ENCODE measurements at regions of chr18 and their contacts with region 1.

Region 1: DNA sequence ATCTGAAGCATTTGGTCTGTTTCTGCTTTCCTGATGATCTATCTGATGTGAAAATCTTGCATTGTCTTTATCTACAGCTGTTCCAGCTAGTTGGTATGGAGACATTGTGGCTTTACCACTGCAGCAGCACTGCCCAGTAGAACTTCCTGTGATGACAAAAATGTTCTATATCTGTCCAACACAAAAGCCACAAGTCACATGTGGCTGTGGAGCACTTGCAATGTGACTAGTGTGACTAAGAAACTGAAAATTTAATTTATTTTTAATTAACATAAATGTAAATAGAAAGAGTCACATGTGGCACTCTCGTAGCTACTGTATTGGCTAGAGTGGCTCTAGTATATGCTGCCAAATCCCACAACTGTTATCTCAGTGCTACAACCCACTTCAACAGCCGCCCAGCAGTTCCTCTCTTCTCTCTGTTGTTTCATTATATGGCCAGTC is 425.7 kb downstream of the SETBP1 start:
- DNase-seq: peak; percentile 17
- ATAC-seq: peak; percentile 56
- H3K4me3 Mint-ChIP-seq: peak overlapping the region; percentile 21
- H3K27ac Mint-ChIP-seq: no peak overlapping the region
- H3K4me1 Mint-ChIP-seq: peaks cover 2% of the 10 kb centered on the region
- H3K27me3 Mint-ChIP-seq: no peaks in the 10 kb centered on the region
- CTCF ChIP-seq: no peak

Region 2: DNA sequence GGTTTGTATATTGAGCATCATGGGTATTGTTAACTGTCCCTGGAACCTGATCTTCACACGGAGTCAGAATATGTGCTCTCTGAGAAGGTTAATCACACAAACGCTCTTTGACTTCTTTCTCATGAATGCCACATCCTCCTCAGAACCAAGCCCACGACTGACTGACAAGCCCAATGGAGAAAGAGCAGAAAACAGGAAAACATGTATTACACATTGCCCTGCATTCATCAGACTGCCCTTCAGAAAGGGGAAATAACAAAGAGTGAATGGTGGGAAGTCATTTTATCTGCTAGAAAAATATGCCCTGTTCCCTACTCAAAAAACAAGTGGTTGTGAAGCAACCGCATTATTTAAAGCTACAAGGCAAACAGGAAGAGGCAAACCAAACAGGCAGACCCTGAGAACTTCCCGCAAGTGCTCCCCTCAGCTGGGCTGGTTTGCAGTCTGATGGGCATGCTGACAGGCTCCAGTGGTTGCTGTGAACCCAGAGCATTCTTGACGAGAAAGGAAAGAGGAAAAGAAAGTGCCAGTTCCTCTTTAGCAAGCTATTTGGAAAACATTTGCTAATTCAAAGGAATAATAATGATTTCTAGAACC is 598.5 kb before region 1 on chr18:
- CTCF ChIA-PET with region 1: no interaction called
- POLR2A ChIA-PET with region 1: interaction called, 4 read pairs
- intact Hi-C with region 1: loop called (anchors 1 kb)
- DNase-seq: peak; percentile 26
- ATAC-seq: peak; percentile 90
- H3K4me3 Mint-ChIP-seq: no peak overlapping the region
- H3K27ac Mint-ChIP-seq: no peak overlapping the region
- H3K4me1 Mint-ChIP-seq: peaks cover 24% of the 10 kb centered on the region
- H3K27me3 Mint-ChIP-seq: no peaks in the 10 kb centered on the region
- CTCF ChIP-seq: no peak

Region 3: DNA sequence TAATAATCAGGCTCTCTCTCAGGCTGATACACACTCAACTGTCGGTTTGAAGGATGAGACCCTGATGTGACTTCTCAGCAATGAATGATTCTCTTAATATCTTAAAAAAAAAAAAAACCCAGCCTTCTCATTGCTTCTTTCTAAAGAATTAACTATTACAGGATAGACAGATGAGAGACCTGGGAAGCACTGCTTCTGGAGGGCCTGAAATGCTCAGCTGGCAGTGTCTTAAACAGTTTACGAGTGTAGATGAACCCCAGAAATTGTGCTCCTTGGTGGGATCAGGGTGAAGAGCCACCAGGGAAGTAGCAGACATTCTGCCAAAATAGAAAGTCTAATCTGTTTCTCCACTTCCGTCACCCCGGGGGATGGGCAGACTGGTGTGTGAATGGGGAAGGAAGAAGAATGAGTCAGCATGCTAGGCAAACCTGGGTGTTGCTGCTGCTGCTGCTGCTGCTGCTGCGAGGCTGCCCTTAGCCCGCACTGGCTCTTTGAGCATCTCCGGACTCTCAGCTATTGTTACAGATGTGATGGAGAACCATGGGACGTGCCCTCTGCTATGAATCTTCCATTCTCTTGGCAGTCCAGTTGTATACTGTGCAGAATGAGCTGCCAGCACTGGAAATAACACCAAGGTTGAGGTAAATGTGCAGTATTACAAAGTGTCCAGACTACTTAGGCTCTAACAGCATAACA is 267.2 kb before region 1 on chr18:
- CTCF ChIA-PET with region 1: no interaction called
- POLR2A ChIA-PET with region 1: no interaction called
- intact Hi-C with region 1: loop called (anchors 5 kb)
- DNase-seq: peak; percentile 58
- ATAC-seq: peak; percentile 83
- H3K4me3 Mint-ChIP-seq: peak overlapping the region; percentile 61
- H3K27ac Mint-ChIP-seq: peak overlapping the region; percentile 81
- H3K4me1 Mint-ChIP-seq: peaks cover 81% of the 10 kb centered on the region
- H3K27me3 Mint-ChIP-seq: no peaks in the 10 kb centered on the region
- CTCF ChIP-seq: no peak

Region 4: DNA sequence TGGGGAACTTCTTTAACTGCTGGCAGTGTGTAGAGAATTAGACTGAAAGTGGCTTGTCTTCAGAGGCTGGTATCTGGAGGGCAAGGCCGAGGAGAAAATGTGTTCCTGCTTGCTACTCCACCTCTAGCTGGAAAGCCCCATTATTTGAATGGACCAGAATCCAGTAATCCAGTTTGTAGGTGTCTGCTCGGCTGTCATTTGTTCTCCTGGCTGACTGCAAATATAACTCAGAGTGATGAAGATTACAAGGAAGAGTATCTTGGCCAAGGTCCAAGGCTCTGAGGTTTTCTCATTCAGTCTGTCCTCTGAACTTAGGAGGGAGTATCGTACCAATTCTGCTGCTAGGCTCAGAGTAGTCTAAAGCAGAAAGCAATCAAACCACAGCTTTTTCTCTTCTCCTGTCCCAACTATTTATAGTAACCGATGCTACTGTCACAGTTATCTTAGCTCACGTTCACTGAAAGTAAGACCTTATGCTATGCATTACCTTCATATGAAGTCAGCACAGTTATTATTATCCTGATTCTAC is 197.1 kb before region 1 on chr18:
- CTCF ChIA-PET with region 1: no interaction called
- POLR2A ChIA-PET with region 1: interaction called, 3 read pairs
- intact Hi-C with region 1: loop called (anchors 5 kb)
- DNase-seq: no peak
- ATAC-seq: peak; percentile 75
- H3K4me3 Mint-ChIP-seq: peak overlapping the region; percentile 50
- H3K27ac Mint-ChIP-seq: peak overlapping the region; percentile 82
- H3K4me1 Mint-ChIP-seq: peaks cover 55% of the 10 kb centered on the region
- H3K27me3 Mint-ChIP-seq: no peaks in the 10 kb centered on the region
- CTCF ChIP-seq: no peak

Region 5: GRCh38 chr18:45136381-45137086 is 30.2 kb after region 1 on chr18:
- CTCF ChIA-PET with region 1: no interaction called
- POLR2A ChIA-PET with region 1: no interaction called
- intact Hi-C with region 1: loop called (anchors 2 kb)
- DNase-seq: no peak
- ATAC-seq: no peak
- H3K4me3 Mint-ChIP-seq: peak overlapping the region; percentile 36
- H3K27ac Mint-ChIP-seq: peak overlapping the region; percentile 72
- H3K4me1 Mint-ChIP-seq: peaks cover 41% of the 10 kb centered on the region
- H3K27me3 Mint-ChIP-seq: no peaks in the 10 kb centered on the region
- CTCF ChIP-seq: no peak